Activated CD4-positive, alpha-beta memory T cell treated with anti-CD3 and anti-CD28 coated beads for 36 hours (primary cell): ENCODE measurements at regions of chr1 and their contacts with region 1.

Region 1: GRCh38 chr1:205199090-205199930 is 12.2 kb downstream of the DSTYK start:
- DNase-seq: peak; percentile 69
- H3K4me3 Mint-ChIP-seq: peak overlapping the region; percentile 54
- H3K27ac Mint-ChIP-seq: peak overlapping the region; percentile 82
- H3K4me1 Mint-ChIP-seq: peaks cover 53% of the 10 kb centered on the region
- H3K27me3 Mint-ChIP-seq: no peaks in the 10 kb centered on the region

Region 2: DNA sequence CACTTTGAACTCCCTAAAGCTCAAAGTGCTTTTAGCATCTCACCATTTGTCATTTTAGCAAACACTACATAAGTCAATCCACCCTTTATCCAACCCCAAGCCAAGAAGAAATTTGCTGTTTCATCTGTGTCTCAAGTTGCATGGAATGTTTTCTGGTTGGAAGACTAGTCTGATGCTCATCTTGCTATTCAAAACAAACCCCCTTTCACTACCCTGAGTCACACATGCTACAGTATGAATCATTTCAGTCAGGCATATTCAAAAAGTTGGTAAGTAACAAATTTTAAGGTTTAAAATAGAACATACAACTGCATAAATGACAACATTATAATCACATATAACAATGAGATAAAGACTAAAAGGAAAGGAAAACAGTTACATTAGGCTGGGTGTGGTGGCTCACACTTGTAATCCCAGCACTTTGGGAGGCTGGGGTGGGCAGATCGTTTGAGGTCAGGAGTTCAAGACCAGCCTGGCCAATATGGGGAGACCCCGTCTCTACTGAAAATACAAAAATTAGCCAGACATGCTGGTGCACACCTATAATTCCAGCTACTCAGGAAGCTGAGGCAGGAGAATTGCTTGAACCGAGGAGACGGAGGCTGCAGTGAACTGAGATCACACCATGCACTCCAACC is 26.5 kb before region 1 on chr1:
- CTCF ChIA-PET with region 1: interaction called, 7 read pairs
- POLR2A ChIA-PET with region 1: interaction called, 3 read pairs
- intact Hi-C with region 1: loop called (anchors 1 kb)
- DNase-seq: peak; percentile 31
- H3K4me3 Mint-ChIP-seq: no peak overlapping the region
- H3K27ac Mint-ChIP-seq: peak overlapping the region; percentile 64
- H3K4me1 Mint-ChIP-seq: peaks cover 24% of the 10 kb centered on the region
- H3K27me3 Mint-ChIP-seq: no peaks in the 10 kb centered on the region

Region 3: GRCh38 chr1:205186191-205186590 is 13.1 kb before region 1 on chr1:
- CTCF ChIA-PET with region 1: interaction called, 11 read pairs
- POLR2A ChIA-PET with region 1: interaction called, 9 read pairs
- intact Hi-C with region 1: loop called (anchors 1 kb)
- DNase-seq: no peak
- H3K4me3 Mint-ChIP-seq: no peak overlapping the region
- H3K27ac Mint-ChIP-seq: peak overlapping the region; percentile 38
- H3K4me1 Mint-ChIP-seq: peaks cover 54% of the 10 kb centered on the region
- H3K27me3 Mint-ChIP-seq: no peaks in the 10 kb centered on the region

Region 4: DNA sequence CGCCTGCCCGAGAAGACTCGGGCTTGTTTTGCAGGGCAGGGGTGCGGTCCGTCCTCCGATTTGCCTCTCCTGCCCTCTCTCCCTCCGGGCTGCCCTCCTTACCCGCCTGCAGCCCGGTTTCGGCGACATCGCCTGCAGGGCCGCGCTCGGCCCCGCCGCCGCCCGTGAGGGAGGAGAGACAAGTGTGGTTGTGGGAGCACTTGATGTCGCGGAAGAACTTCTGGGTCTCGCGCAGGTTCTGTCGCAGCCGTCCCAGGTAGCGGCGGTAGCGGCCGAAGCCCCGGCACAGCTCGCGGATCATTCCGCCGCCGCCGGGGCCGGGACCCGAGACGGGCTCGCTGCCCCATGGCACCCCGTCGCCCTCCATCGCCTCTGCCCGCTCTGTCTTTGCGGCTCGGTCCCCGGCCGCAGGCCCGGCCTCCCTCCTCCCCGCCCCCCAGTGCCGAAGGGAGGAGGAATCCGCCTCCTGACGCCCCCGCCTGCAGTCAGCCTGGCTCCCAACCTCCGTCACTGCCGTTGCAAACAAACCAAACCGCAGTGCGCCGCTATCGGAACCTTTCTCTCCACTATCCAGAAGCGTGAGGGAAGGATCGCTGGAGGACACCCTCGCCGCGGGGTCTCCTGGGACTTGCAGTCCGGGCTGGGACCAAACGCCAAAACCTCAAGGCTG is 12.0 kb after region 1 on chr1 and contains the start of gene DSTYK:
- CTCF ChIA-PET with region 1: interaction called, 6 read pairs
- POLR2A ChIA-PET with region 1: interaction called, 14 read pairs
- intact Hi-C with region 1: loop called (anchors 1 kb)
- DNase-seq: peak; percentile 96
- H3K4me3 Mint-ChIP-seq: peak within 1 kb of the TSS; percentile 92
- H3K27ac Mint-ChIP-seq: peak within 1 kb of the TSS; percentile 91
- H3K4me1 Mint-ChIP-seq: peaks cover 48% of the 10 kb centered on the region
- H3K27me3 Mint-ChIP-seq: no peaks in the 10 kb centered on the region
- total RNA-seq, gene DSTYK: 9.0 to 9.8 TPM

Region 5: DNA sequence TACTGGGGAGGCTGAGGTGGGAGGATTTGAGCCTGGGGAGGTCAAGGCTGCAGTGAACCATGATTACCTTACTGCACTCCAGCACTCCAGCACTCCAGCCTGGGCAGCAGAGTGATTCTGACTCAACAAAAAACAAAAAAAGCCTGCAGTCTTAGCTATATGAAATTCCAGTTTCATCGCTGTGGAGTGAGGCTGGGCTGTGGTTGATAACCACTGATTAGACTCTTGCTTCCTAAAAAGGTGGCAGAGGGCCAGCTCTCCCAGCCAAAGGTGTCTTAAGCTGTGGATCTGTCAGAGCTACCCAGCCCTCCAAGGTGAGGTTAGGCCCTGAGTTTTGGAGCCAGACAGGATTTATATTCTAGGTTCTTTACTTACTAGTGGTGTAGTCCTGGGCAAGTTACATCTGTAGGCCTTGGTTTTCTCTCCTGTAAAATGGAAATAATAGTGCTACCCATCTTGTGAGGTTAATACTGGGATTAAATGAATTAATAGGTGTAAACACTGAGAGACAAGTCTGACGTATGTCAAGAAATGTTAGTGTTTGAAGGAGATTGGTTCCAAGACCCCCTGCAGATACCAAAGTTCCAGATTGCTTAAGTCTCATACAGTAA is 64.4 kb after region 1 on chr1:
- CTCF ChIA-PET with region 1: no interaction called
- POLR2A ChIA-PET with region 1: no interaction called
- intact Hi-C with region 1: no loop called
- DNase-seq: no peak
- H3K4me3 Mint-ChIP-seq: no peak overlapping the region
- H3K27ac Mint-ChIP-seq: no peak overlapping the region
- H3K4me1 Mint-ChIP-seq: peaks cover 16% of the 10 kb centered on the region
- H3K27me3 Mint-ChIP-seq: no peaks in the 10 kb centered on the region